ENCODE measurements at regions of chr2 and their contacts with region 1.

Region 1: GRCh38 chr2:156435715-156436496 is at the start of gene GPD2:
- DNase-seq: peak; percentile 12 to 78 (median 65)
- ATAC-seq: peak; percentile 69
- H3K4me3 ChIP-seq: peak within 1 kb of the TSS; percentile 70 to 81
- H3K4me3 Mint-ChIP-seq: peak within 1 kb of the TSS; percentile 99
- H3K27ac ChIP-seq: peak within 1 kb of the TSS; percentile 44 to 78
- H3K27ac Mint-ChIP-seq: peak within 1 kb of the TSS; percentile 98
- H3K4me1 ChIP-seq: peaks cover 21% of the 10 kb centered on the region
- H3K4me1 Mint-ChIP-seq: peaks cover 39% of the 10 kb centered on the region
- H3K27me3 ChIP-seq: no peaks in the 10 kb centered on the region
- H3K27me3 Mint-ChIP-seq: no peaks in the 10 kb centered on the region
- CTCF ChIP-seq: no peak
- total RNA-seq, gene GPD2: 4.7 to 6.9 TPM

Region 2: GRCh38 chr2:156341452-156342253 is 94.3 kb before region 1 on chr2:
- CTCF ChIA-PET with region 1: no interaction called
- POLR2A ChIA-PET with region 1: interaction called, 4 read pairs
- intact Hi-C with region 1: loop called in 1 of 2 experiments (anchors 2 kb)
- DNase-seq: peak; percentile 73 to 96 (median 87)
- ATAC-seq: peak; percentile 75
- H3K4me3 ChIP-seq: peak overlapping the region; percentile 57 to 91
- H3K4me3 Mint-ChIP-seq: peak overlapping the region; percentile 90
- H3K27ac ChIP-seq: peak overlapping the region; percentile 99
- H3K27ac Mint-ChIP-seq: peak overlapping the region; percentile 98
- H3K4me1 ChIP-seq: peaks cover 19% of the 10 kb centered on the region
- H3K4me1 Mint-ChIP-seq: peaks cover 39% of the 10 kb centered on the region
- H3K27me3 ChIP-seq: no peaks in the 10 kb centered on the region
- H3K27me3 Mint-ChIP-seq: no peaks in the 10 kb centered on the region
- CTCF ChIP-seq: no peak

Region 3: DNA sequence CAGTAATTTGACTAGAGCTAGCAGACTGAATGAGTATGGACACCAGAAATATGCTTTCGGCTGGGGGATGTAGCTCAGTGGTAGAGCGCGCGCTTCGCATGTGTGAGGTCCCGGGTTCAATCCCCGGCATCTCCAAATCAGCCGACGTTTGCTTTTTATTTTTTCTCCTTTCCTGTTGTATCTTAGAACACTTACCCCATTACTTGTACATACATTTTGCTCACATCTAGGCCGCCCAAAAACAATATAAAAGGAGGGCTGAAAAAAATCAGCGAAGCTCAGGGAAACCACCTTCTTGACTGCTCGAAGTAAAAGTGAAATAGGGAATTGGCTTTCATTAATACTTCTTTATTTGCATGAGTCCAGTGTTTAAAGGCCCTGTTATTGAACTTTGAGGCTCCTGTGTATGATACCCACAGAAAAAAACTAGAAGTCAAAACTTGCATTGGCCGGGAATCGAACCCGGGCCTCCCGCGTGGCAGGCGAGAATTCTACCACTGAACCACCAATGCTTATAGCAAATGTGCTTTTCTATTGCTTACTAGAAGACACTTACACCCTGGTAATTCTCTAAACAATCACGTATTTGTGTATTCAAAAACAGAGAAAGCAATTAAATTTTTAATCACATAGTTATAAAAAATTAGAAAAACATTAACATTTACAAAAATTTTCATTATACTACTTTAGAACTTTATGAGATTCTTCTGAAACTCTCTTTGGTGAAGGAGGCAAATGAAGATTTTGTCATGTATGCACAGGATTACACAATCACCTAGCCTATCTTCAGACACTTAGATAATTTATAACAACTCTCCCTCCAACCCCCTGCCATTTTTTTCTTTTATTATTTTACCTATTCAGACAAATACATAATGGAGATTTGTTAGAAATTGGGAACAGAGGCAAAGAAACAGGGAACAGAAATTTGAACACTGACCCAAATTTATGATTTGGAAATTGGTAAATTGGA is 34.9 kb before region 1 on chr2:
- CTCF ChIA-PET with region 1: interaction called, 4 read pairs
- POLR2A ChIA-PET with region 1: interaction called, 7 read pairs
- intact Hi-C with region 1: loop called (anchors 1 to 2 kb)
- DNase-seq: peak; percentile 62 to 92 (median 81)
- ATAC-seq: peak; percentile 79
- H3K4me3 ChIP-seq: peak overlapping the region; percentile 74 to 85
- H3K4me3 Mint-ChIP-seq: peak overlapping the region; percentile 88
- H3K27ac ChIP-seq: peak overlapping the region; percentile 80 to 93
- H3K27ac Mint-ChIP-seq: peak overlapping the region; percentile 95
- H3K4me1 ChIP-seq: peaks cover 4% of the 10 kb centered on the region
- H3K4me1 Mint-ChIP-seq: peaks cover 28% of the 10 kb centered on the region
- H3K27me3 ChIP-seq: no peaks in the 10 kb centered on the region
- H3K27me3 Mint-ChIP-seq: no peaks in the 10 kb centered on the region
- CTCF ChIP-seq: no peak

Region 4: GRCh38 chr2:156476850-156477206 is 40.9 kb after region 1 on chr2:
- CTCF ChIA-PET with region 1: no interaction called
- POLR2A ChIA-PET with region 1: no interaction called
- intact Hi-C with region 1: loop called in 1 of 2 experiments (anchors 5 kb)
- DNase-seq: no peak
- ATAC-seq: no peak
- H3K4me3 ChIP-seq: no peak overlapping the region
- H3K4me3 Mint-ChIP-seq: peak overlapping the region; percentile 2
- H3K27ac ChIP-seq: no peak overlapping the region
- H3K27ac Mint-ChIP-seq: no peak overlapping the region
- H3K4me1 ChIP-seq: peaks cover 6% of the 10 kb centered on the region
- H3K4me1 Mint-ChIP-seq: peaks cover 41% of the 10 kb centered on the region
- H3K27me3 ChIP-seq: no peaks in the 10 kb centered on the region
- H3K27me3 Mint-ChIP-seq: no peaks in the 10 kb centered on the region
- CTCF ChIP-seq: no peak

Region 5: GRCh38 chr2:156490466-156490840 is 54.5 kb after region 1 on chr2:
- CTCF ChIA-PET with region 1: no interaction called
- POLR2A ChIA-PET with region 1: no interaction called
- intact Hi-C with region 1: loop called in 1 of 2 experiments (anchors 10 kb)
- DNase-seq: no peak
- ATAC-seq: no peak
- H3K4me3 ChIP-seq: no peak overlapping the region
- H3K4me3 Mint-ChIP-seq: no peak overlapping the region
- H3K27ac ChIP-seq: no peak overlapping the region
- H3K27ac Mint-ChIP-seq: no peak overlapping the region
- H3K4me1 ChIP-seq: peaks cover under 1% of the 10 kb centered on the region
- H3K4me1 Mint-ChIP-seq: peaks cover 26% of the 10 kb centered on the region
- H3K27me3 ChIP-seq: no peaks in the 10 kb centered on the region
- H3K27me3 Mint-ChIP-seq: no peaks in the 10 kb centered on the region
- CTCF ChIP-seq: no peak

Measured in CD8-positive, alpha-beta T cell (primary cell).